Adrenal gland (tissue), 19 donors: ENCODE measurements at regions of chr10 and their contacts with region 1.

Region 1: DNA sequence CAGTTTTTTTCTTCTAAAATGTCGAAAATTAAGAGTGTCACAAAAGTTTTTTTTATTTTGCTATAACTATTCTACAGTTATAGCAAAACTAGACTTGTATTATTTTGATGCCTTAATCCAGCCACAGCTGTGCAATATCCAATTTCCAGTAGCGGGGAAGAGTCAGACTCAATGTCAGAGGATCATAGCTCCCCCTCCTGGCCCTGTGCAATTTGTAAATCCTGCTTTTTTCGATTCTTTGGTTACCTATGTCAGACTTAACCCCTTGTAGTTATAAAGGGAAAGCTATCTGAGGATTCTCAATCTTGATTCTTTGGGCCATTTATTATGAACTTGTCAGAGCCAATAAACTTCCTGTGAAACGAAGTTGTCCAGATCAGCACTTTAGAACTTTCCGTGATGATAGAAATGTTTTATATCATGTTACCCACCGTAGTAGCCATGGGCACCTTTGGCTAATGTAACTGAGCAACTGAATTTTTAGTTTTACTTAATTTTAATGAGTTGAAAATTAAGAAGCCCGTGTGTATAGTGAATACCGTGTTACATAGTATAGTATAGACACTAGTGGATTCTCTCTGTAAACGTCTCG is 87.7 kb upstream of the PRKCQ start:
- DNase-seq: peak in 6 of 7 donors; percentile 27 to 62 (median 34)
- H3K4me3 ChIP-seq: no peak overlapping the region
- H3K27ac ChIP-seq: no peak overlapping the region
- H3K4me1 ChIP-seq: no peaks in the 10 kb centered on the region
- H3K27me3 ChIP-seq: peaks cover 8% of the 10 kb centered on the region
- CTCF ChIP-seq: peak; percentile 28 to 50 (median 44)
- POLR2A ChIP-seq: no peak

Region 2: GRCh38 chr10:6020826-6021225 is 646.9 kb before region 1 on chr10:
- intact Hi-C with region 1: no loop called
- DNase-seq: peak in 2 of 7 donors; percentile 19 to 43
- H3K4me3 ChIP-seq: no peak overlapping the region
- H3K27ac ChIP-seq: peak overlapping the region in 1 of 5 donors; percentile 38
- H3K4me1 ChIP-seq: no peaks in the 10 kb centered on the region
- H3K27me3 ChIP-seq: no peaks in the 10 kb centered on the region
- CTCF ChIP-seq: no peak
- POLR2A ChIP-seq: no peak

Region 3: GRCh38 chr10:6423004-6423403 is 244.8 kb before region 1 on chr10:
- intact Hi-C with region 1: loop called in 1 of 2 experiments (anchors 10 kb)
- DNase-seq: no peak
- H3K4me3 ChIP-seq: no peak overlapping the region
- H3K27ac ChIP-seq: no peak overlapping the region
- H3K4me1 ChIP-seq: no peaks in the 10 kb centered on the region
- H3K27me3 ChIP-seq: no peaks in the 10 kb centered on the region
- CTCF ChIP-seq: no peak
- POLR2A ChIP-seq: no peak

Region 4: GRCh38 chr10:7417103-7417623 is 749.4 kb after region 1 on chr10:
- intact Hi-C with region 1: loop called in 1 of 2 experiments (anchors 5 kb)
- DNase-seq: no peak
- H3K4me3 ChIP-seq: no peak overlapping the region
- H3K27ac ChIP-seq: no peak overlapping the region
- H3K4me1 ChIP-seq: peaks cover 0 to 12% of the 10 kb centered on the region in 2 donors
- H3K27me3 ChIP-seq: peaks cover 4% of the 10 kb centered on the region
- CTCF ChIP-seq: peak; percentile 38 to 81 (median 58)
- POLR2A ChIP-seq: no peak